Psoas muscle (tissue), 8 donors: ENCODE measurements at regions of chr16 and their contacts with region 1.

Region 1: DNA sequence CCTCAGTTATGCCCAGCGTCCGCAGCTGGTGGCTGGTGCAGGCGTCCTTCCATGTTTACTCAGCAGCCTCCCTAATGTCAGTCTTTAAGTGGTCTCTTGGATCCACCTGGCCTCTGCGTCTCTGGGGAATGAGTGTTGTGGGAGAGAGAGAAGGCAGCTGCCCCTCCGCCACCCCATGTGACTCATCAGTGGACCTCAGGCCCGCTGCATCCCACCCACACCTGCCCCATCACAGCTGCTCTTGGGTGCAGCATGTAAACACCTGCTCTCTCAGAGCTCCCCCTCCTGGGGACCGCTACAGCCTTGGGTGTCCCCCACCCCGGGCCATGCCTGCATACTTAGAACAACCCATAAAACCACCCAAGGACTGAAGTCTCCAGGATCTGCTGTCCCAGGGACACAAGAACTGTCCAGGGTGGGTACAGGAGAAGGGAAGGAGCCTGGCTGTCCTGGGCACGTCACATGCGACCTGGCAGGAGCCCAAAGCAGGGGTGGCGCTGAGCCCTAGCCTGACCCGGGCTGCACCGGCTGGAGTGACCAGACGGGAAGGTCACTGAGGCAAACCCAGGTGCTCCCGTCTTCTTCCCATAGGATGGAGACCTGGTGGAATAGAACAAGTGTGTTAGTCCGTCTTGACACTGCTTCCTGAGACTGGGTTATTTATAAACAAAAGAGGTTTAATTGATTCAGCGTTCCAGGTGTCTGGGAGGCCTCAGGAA is 4.2 kb downstream of the C16orf90 start:
- DNase-seq: no peak
- ATAC-seq: peak in 3 of 4 donors; percentile 31 to 42 (median 42)
- H3K4me3 ChIP-seq: no peak overlapping the region
- H3K27ac ChIP-seq: no peak overlapping the region
- H3K4me1 ChIP-seq: peaks cover 11% of the 10 kb centered on the region
- H3K27me3 ChIP-seq: no peaks in the 10 kb centered on the region
- CTCF ChIP-seq: no peak

Region 2: DNA sequence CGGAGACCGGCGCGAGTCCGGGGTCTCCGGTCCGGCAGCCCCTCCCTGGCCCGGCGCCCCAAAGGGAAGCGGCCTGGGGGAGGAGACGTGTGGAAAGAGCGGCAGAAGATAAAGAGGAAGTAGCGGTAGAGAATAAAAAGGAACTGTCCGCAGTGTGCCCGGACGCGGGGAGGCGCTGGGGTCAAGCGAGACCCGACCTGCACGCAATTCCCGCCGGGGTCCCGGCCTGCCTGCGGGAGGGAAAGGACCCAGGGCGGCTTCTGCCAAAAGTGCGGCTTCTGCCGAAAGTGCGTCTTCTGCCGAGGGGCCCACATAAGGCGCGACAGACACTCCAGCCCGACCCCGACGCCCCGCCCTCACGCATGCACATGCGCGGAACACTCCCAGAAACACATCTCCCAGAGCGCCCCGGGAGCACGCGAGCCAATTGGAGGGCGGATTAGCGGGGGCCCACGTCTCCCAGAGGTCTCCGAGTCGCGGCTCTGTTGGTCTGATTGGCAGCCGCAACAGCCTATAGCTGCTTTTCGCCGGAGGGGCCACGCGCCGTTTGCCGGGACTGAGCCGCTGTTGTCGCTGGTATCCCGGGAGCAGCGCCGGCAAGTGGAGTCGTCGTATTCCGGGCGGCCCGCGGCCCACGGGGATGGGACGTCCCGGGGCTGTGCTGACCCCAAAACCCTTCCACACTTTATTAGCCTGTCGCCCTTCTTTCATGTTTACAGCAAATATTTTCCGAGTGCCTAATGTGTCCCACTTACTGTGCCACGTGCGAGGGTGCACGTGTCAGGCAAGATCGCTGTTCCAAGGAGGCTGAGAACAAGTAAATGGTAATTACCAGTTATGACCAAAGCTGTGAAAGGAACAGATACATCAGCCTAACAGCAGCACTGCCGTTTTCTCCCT is 226.7 kb before region 1 on chr16:
- intact Hi-C with region 1: loop called in 1 of 2 experiments (anchors 10 kb)
- DNase-seq: peak; percentile 98
- ATAC-seq: peak; percentile 97 to 98 (median 97)
- H3K4me3 ChIP-seq: peak overlapping the region; percentile 80
- H3K27ac ChIP-seq: peak overlapping the region; percentile 95
- H3K4me1 ChIP-seq: peaks cover 3% of the 10 kb centered on the region
- H3K27me3 ChIP-seq: no peaks in the 10 kb centered on the region
- CTCF ChIP-seq: peak; percentile 5

Region 3: GRCh38 chr16:3282730-3283524 is 208.1 kb before region 1 on chr16 and contains the start of gene ZNF263:
- intact Hi-C with region 1: no loop called
- DNase-seq: peak; percentile 96 to 97
- ATAC-seq: peak; percentile 96 to 98 (median 97)
- H3K4me3 ChIP-seq: peak within 1 kb of the TSS; percentile 76
- H3K27ac ChIP-seq: peak within 1 kb of the TSS; percentile 100
- H3K4me1 ChIP-seq: peaks cover 15% of the 10 kb centered on the region
- H3K27me3 ChIP-seq: no peaks in the 10 kb centered on the region
- CTCF ChIP-seq: no peak
- total RNA-seq, gene ZNF263: 11.0 to 17.8 (median 11.7) TPM